Endothelial cell of umbilical vein (primary cell): ENCODE measurements at regions of chr1 and their contacts with region 1.

Region 1: DNA sequence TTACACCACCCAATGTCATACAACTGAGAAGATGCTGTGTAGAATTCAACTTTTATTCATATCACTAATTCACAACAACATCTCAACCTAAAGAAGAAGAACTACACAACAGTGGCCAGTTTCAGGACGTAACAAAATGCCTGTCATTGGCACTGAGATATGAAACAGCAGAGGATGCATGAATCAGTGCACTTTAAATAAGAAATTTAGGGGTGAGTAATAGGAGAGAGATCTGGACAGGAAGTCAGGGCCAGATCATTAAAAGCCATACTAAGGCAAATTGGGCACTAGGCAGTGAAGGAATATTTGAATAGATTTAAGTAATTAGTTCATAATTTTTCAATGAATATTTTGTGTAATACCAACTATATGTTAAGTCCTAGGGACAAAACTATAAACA is 510.5 kb downstream of the PLPP3 start:
- DNase-seq: peak; percentile 76
- H3K4me3 ChIP-seq: no peak overlapping the region
- H3K27ac ChIP-seq: peak overlapping the region; percentile 54
- H3K4me1 ChIP-seq: peaks cover 41% of the 10 kb centered on the region
- H3K27me3 ChIP-seq: no peaks in the 10 kb centered on the region
- CTCF ChIP-seq: no peak
- POLR2A ChIP-seq: no peak

Region 2: GRCh38 chr1:56080139-56080538 is 11.2 kb after region 1 on chr1:
- CTCF ChIA-PET with region 1: interaction called, 3 read pairs
- POLR2A ChIA-PET with region 1: no interaction called
- dilution Hi-C with region 1: no loop called
- intact Hi-C with region 1: loop called (anchors 1 kb)
- DNase-seq: peak; percentile 69
- H3K4me3 ChIP-seq: no peak overlapping the region
- H3K27ac ChIP-seq: peak overlapping the region; percentile 58
- H3K4me1 ChIP-seq: peaks cover 15% of the 10 kb centered on the region
- H3K27me3 ChIP-seq: no peaks in the 10 kb centered on the region
- CTCF ChIP-seq: no peak
- POLR2A ChIP-seq: peak; percentile 59